ENCODE measurements at regions of chr5 and their contacts with region 1.

Region 1: GRCh38 chr5:31463351-31463750 is 68.5 kb downstream of the DROSHA start:
- DNase-seq: no peak
- ATAC-seq: no peak
- H3K4me3 ChIP-seq: no peak overlapping the region
- H3K27ac ChIP-seq: no peak overlapping the region
- H3K4me1 ChIP-seq: no peaks in the 10 kb centered on the region
- H3K27me3 ChIP-seq: no peaks in the 10 kb centered on the region
- CTCF ChIP-seq: no peak
- POLR2A ChIP-seq: no peak

Region 2: DNA sequence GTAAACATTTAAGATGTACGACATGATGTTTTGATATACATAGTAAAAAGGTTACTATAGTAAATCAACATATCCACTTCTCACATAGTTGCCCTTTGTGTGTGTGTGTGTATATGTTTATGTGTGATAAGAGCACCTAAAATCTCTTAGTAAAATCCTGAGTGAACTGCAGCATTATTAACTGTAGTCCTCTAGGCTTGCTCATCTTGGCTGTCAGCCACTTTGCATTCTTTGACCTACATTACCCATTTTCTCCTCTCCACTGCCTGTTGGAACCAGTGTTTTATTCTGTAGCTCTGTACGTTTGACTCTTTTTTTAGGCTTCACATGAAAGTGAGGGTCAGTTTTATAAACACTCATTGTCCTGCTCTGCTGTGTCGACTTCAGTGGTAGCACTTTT is 93.1 kb after region 1 on chr5:
- intact Hi-C with region 1: loop called in 1 of 10 experiments (anchors 5 kb)
- DNase-seq: no peak
- ATAC-seq: no peak
- H3K4me3 ChIP-seq: no peak overlapping the region
- H3K27ac ChIP-seq: no peak overlapping the region
- H3K4me1 ChIP-seq: no peaks in the 10 kb centered on the region
- H3K27me3 ChIP-seq: no peaks in the 10 kb centered on the region
- CTCF ChIP-seq: no peak
- POLR2A ChIP-seq: no peak

Measured in heart left ventricle (tissue), 16 donors.